Posterior cingulate gyrus (tissue), 11 donors: ENCODE measurements at regions of chr3 and their contacts with region 1.

Region 1: DNA sequence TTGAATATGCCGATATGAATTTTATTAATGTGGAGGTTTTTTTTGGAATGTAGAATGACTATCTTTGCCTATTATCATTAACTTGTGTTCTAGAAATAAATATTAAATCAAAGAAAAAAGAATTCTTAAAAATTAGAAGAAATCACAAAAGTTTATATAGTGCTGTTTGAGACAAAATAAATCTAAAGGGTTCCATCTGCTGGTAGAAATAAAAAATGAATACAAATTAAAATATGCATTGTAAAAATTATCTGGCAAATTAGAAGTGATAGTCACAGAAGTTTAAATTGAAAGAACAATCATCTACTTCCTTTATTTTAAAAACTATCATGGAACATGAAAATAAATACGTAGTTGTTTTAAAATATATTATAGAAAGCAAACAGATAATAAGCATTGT is 22.7 kb upstream of the ZBTB20 start:
- DNase-seq: no peak

Region 2: GRCh38 chr3:114892135-114892879 is 277.5 kb before region 1 on chr3:
- intact Hi-C with region 1: no loop called
- DNase-seq: no peak

Region 3: DNA sequence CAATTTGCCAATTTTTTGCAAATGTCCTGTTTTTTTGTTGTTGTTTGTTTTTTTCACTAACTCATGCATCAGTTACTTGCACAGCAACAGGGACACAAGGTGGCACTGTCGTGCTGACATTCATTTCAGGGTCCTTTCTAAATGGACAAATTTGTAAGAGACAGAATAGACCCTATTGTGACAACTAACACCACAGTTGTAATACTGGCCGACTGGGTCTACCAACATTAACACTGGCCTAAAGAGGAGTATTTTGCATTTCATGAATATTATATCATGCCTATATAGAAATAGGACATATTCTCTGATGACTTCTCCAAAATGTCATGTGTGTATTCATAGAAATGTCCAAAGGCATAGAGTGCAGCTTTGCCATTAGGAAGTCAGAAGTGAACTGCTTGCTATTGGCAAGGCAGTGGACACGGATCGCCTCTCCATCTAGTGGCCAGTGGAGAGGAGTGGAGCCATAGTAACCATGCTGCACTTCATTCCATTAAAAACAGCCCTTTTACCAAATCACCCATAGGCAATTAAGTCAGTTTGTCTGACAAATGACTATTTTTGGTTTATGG is 77.5 kb before region 1 on chr3:
- intact Hi-C with region 1: loop called (anchors 5 kb)
- DNase-seq: peak; percentile 52 to 96 (median 74)